Gastrocnemius medialis (tissue), 4 donors: ENCODE measurements at regions of chr9 and their contacts with region 1.

Region 1: DNA sequence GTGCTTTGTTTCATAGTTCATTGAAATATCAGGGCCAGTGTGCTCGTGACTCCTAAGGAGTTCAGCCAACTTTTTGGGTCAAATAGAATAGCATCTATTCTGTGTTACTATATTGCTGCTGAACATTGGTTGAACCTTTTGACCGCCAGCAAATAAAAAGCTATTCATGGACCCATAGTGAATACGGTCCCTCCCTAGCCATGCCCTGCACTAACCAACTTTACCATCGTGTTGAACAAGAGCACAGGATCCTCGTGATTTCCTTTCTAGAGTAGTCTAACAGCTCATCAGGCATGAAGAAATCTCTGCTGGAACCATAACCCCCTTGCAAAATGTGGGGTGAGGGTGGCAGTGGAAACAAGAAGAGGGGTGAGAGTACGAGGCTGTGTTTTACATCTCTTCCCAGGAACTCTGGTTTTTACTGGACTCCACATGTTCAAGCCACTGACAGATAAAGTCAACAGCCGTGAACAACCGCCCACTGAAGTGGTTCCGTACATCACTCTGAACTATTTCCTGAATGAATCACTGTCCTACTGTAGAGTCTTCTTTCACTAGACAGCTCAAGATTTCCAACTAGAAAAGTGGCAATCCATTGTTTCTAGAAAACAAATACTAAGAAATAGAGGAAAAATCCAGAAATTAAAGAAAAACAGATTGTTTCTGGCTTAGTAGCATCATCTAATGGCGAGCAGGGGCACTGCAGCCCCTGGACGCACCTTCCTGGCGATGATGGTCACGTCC is 70.1 kb upstream of the SPATA31E1 start:
- DNase-seq: no peak
- ATAC-seq: no peak
- H3K4me3 ChIP-seq: no peak overlapping the region
- H3K27ac ChIP-seq: no peak overlapping the region
- H3K4me1 ChIP-seq: no peaks in the 10 kb centered on the region
- H3K27me3 ChIP-seq: no peaks in the 10 kb centered on the region
- CTCF ChIP-seq: peak; percentile 45 to 69 (median 63)
- POLR2A ChIP-seq: no peak

Region 2: GRCh38 chr9:87678650-87679515 is 133.7 kb before region 1 on chr9:
- in situ Hi-C with region 1: loop called in 2 of 4 experiments (anchors 5 to 10 kb)
- intact Hi-C with region 1: loop called (anchors 1 kb)
- DNase-seq: peak in 1 of 2 donors; percentile 34
- ATAC-seq: no peak
- H3K4me3 ChIP-seq: no peak overlapping the region
- H3K27ac ChIP-seq: no peak overlapping the region
- H3K4me1 ChIP-seq: no peaks in the 10 kb centered on the region
- H3K27me3 ChIP-seq: no peaks in the 10 kb centered on the region
- CTCF ChIP-seq: peak; percentile 56 to 78 (median 70)
- POLR2A ChIP-seq: no peak

Region 3: DNA sequence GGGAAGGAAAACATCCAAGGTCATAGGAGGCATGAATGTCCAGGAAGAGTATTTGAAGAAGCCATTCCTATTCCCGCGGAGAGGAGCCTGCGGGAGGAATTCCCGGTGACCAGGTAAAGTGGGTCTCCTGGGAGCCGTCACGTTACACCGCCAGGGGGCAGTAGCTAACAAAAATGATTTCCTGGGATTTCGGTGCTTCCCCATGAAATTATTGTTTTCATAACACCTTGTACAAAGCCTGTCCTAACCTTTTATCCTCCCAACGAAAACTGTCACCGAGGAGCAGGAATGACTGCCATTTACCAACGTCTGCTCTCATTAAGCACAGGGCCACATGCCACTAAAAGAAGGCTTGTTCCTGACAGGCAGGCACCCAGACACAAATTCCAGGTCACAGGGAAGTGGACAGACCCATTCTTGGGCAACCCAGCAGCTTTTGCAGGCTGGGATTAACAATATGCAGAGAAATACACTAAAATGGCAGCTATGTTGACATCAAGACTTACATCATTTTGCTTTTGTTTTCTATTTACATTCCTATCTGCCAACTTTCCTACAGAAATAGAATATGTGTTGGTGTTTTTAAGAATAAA is 127.8 kb before region 1 on chr9:
- in situ Hi-C with region 1: loop called (anchors 5 to 10 kb)
- intact Hi-C with region 1: loop called (anchors 1 kb)
- DNase-seq: no peak
- ATAC-seq: peak; percentile 16 to 60
- H3K4me3 ChIP-seq: no peak overlapping the region
- H3K27ac ChIP-seq: no peak overlapping the region
- H3K4me1 ChIP-seq: no peaks in the 10 kb centered on the region
- H3K27me3 ChIP-seq: no peaks in the 10 kb centered on the region
- CTCF ChIP-seq: peak; percentile 31 to 70 (median 64)
- POLR2A ChIP-seq: no peak